Activated CD8-positive, alpha-beta T cell treated with anti-CD3 and anti-CD28 coated beads for 36 hours (primary cell): ENCODE measurements at regions of chr15 and their contacts with region 1.

Region 1: DNA sequence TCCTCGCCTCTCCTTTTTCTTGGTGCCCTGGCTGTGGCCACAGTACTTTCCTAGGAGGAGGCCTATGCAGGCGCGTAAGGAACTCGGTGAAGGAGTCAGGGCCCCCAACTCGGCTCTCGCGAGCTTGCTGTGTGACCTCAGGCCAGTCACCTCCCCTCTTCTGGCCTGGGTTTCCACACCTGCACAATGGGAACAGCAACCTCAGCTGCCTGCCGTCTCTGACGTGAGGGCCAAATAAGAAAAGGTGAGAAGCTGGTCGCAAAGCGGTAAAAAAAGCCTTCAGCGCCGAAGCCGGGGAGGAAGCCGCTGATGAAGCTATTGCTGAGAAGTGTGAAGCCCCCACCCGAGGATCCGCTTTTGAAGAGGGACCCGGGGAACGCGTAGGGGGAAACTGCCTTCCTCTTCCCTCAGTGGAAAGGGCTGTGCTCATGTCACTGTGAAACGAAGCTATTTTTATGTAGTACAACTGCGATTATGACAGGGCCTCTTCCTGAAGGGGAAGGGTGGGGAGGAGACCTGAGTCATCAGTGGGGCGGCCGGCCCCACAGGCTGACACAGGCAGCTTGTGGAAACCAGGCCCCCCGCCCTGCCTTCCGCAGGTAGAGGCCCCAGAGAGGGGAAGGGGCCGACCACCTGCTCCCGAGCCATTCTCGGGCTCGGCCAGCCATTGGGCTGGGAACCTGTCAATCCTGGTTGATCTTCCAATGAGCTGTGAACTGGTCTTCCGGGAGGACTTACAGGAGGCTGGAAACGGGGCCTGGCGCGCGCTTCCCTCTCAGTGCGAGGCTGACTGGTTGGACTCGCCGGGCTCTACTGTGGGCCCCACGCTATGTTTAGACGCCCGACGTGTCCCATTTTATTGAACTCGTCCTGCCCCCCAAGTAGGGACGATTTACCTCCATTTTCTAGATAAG is 18.0 kb upstream of the ANKDD1A start:
- DNase-seq: peak; percentile 99
- ATAC-seq: peak; percentile 82
- H3K4me3 Mint-ChIP-seq: peak overlapping the region; percentile 91
- H3K27ac Mint-ChIP-seq: peak overlapping the region; percentile 99
- H3K4me1 Mint-ChIP-seq: peaks cover 54% of the 10 kb centered on the region
- H3K27me3 Mint-ChIP-seq: no peaks in the 10 kb centered on the region
- CTCF ChIP-seq: no peak

Region 2: DNA sequence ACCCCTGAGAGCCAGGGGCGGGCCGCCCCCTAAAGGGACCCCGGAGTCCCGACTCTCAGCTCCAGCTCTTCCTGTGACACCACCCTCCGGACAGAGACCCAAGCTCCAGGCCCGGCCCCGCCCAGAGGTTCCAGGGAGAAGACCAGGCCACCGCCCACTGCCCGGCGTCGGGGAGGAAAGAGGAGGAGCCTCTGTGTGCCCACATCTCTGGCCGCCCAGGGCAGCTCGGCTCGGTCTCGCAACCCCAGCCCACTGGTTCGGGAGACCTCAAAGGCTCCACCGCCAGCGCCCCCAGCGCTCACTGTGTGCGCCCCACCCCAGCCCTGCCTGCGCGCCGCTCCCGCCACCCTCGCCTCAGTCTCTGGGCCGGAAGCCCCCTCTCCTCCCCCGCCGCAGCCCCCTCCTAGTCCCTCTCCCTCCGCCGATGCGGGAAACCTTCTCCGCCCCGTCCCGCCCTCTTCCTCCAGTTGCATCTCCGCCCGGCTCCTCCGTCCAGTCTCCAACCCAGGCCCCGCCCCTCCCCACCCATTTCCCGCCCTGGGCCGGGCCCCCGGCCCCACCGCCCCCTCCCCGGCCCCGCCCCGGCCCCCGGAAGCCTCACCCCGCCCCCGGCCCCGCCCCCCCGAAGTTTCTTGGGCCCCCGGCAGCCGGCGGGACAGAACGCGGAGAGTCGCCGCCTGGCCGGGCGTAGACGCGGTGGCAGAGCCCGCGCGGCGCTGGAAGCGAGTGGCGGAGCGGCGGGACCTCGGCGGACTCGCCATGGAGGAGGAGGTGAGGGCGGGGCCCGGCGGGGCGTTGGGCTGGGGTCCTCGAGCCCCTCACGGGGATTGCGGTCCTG is 52.3 kb before region 1 on chr15 and contains the start of gene PLEKHO2:
- CTCF ChIA-PET with region 1: interaction called, 70 read pairs
- POLR2A ChIA-PET with region 1: interaction called, 27 read pairs
- intact Hi-C with region 1: loop called (anchors 5 kb)
- DNase-seq: peak; percentile 93
- ATAC-seq: peak; percentile 76
- H3K4me3 Mint-ChIP-seq: peak within 1 kb of the TSS; percentile 86
- H3K27ac Mint-ChIP-seq: peak within 1 kb of the TSS; percentile 89
- H3K4me1 Mint-ChIP-seq: peaks cover 67% of the 10 kb centered on the region
- H3K27me3 Mint-ChIP-seq: no peaks in the 10 kb centered on the region
- CTCF ChIP-seq: peak; percentile 47
- total RNA-seq, gene PLEKHO2: 10.1 to 10.4 TPM